CD8-positive, alpha-beta T cell (primary cell): ENCODE measurements at regions of chr12 and their contacts with region 1.

Region 1: GRCh38 chr12:108562348-108563135 is at the start of gene ISCU:
- DNase-seq: peak; percentile 97 to 100 (median 99)
- ATAC-seq: peak; percentile 70
- H3K4me3 ChIP-seq: peak within 1 kb of the TSS; percentile 90 to 96
- H3K4me3 Mint-ChIP-seq: peak within 1 kb of the TSS; percentile 100
- H3K27ac ChIP-seq: peak within 1 kb of the TSS; percentile 92 to 94
- H3K27ac Mint-ChIP-seq: peak within 1 kb of the TSS; percentile 100
- H3K4me1 ChIP-seq: peaks cover 44% of the 10 kb centered on the region
- H3K4me1 Mint-ChIP-seq: peaks cover 55% of the 10 kb centered on the region
- H3K27me3 ChIP-seq: no peaks in the 10 kb centered on the region
- H3K27me3 Mint-ChIP-seq: no peaks in the 10 kb centered on the region
- CTCF ChIP-seq: no peak
- total RNA-seq, gene ISCU: 254 to 260 TPM

Region 2: GRCh38 chr12:106962286-106962685 is 1600.3 kb before region 1 on chr12:
- CTCF ChIA-PET with region 1: no interaction called
- POLR2A ChIA-PET with region 1: no interaction called
- intact Hi-C with region 1: no loop called
- DNase-seq: no peak
- ATAC-seq: no peak
- H3K4me3 ChIP-seq: no peak overlapping the region
- H3K4me3 Mint-ChIP-seq: no peak overlapping the region
- H3K27ac ChIP-seq: no peak overlapping the region
- H3K27ac Mint-ChIP-seq: no peak overlapping the region
- H3K4me1 ChIP-seq: peaks cover 33% of the 10 kb centered on the region
- H3K4me1 Mint-ChIP-seq: peaks cover 64% of the 10 kb centered on the region
- H3K27me3 ChIP-seq: no peaks in the 10 kb centered on the region
- H3K27me3 Mint-ChIP-seq: no peaks in the 10 kb centered on the region
- CTCF ChIP-seq: no peak

Region 3: DNA sequence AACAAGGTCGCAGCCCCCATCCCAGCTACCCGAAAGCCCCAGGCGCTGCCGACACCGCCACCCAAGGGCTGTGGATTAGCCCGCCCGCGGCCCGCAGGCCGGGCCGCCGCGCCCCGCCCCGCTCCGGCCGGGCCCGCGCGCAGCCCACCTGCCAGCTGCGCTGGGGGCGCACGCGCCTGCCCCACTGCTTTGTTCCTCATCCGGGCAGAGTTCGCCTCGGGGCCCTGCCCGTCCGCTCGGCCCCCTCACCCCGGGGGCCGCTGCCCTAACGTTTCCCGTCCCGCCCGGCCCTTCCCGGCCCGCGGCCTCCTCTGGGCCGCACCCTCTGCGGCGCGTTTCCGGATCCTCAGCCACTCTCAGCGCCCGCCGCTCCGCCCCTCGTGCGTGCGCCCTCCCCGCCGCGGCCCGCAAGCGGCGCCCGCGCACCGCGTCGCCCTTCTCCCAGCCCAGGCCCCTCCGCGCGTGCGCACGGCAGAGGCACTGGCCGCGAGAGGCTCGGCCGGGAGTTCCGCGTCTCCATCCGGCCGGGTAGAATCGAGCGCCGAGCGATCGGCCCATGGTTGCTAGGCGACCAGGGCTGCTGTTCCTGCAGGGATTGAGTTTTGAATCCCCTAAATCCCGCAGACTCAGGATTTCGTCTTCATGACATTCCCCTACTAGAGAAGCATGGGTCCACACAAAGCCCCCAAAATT is 801.6 kb before region 1 on chr12 and contains the start of gene PRDM4:
- CTCF ChIA-PET with region 1: no interaction called
- POLR2A ChIA-PET with region 1: no interaction called
- intact Hi-C with region 1: loop called in 1 of 2 experiments (anchors 2 kb)
- DNase-seq: peak; percentile 76 to 97 (median 88)
- ATAC-seq: peak; percentile 95
- H3K4me3 ChIP-seq: peak within 1 kb of the TSS; percentile 76 to 82
- H3K4me3 Mint-ChIP-seq: peak within 1 kb of the TSS; percentile 89
- H3K27ac ChIP-seq: peak within 1 kb of the TSS; percentile 80 to 83
- H3K27ac Mint-ChIP-seq: peak within 1 kb of the TSS; percentile 90
- H3K4me1 ChIP-seq: peaks cover 31% of the 10 kb centered on the region
- H3K4me1 Mint-ChIP-seq: peaks cover 44% of the 10 kb centered on the region
- H3K27me3 ChIP-seq: no peaks in the 10 kb centered on the region
- H3K27me3 Mint-ChIP-seq: no peaks in the 10 kb centered on the region
- CTCF ChIP-seq: no peak
- total RNA-seq, gene PRDM4: 44.9 to 46.0 TPM

Region 4: GRCh38 chr12:108664338-108665258 is 102.1 kb after region 1 on chr12:
- CTCF ChIA-PET with region 1: interaction called, 75 read pairs
- POLR2A ChIA-PET with region 1: interaction called, 10 read pairs
- intact Hi-C with region 1: loop called in 1 of 2 experiments (anchors 1 kb)
- DNase-seq: peak; percentile 70 to 89 (median 83)
- ATAC-seq: peak; percentile 100
- H3K4me3 ChIP-seq: no peak overlapping the region
- H3K4me3 Mint-ChIP-seq: no peak overlapping the region
- H3K27ac ChIP-seq: peak overlapping the region in 1 of 2 experiments; percentile 31
- H3K27ac Mint-ChIP-seq: peak overlapping the region; percentile 79
- H3K4me1 ChIP-seq: peaks cover 5% of the 10 kb centered on the region
- H3K4me1 Mint-ChIP-seq: peaks cover 15% of the 10 kb centered on the region
- H3K27me3 ChIP-seq: no peaks in the 10 kb centered on the region
- H3K27me3 Mint-ChIP-seq: no peaks in the 10 kb centered on the region
- CTCF ChIP-seq: peak; percentile 92

Region 5: GRCh38 chr12:108856428-108857157 is 294.1 kb after region 1 on chr12:
- CTCF ChIA-PET with region 1: no interaction called
- POLR2A ChIA-PET with region 1: interaction called, 7 read pairs
- intact Hi-C with region 1: loop called in 1 of 2 experiments (anchors 1 kb)
- DNase-seq: peak; percentile 27 to 92 (median 64)
- ATAC-seq: peak; percentile 70
- H3K4me3 ChIP-seq: peak overlapping the region; percentile 58 to 71
- H3K4me3 Mint-ChIP-seq: peak overlapping the region; percentile 98
- H3K27ac ChIP-seq: peak overlapping the region; percentile 54 to 77
- H3K27ac Mint-ChIP-seq: peak overlapping the region; percentile 97
- H3K4me1 ChIP-seq: peaks cover 27% of the 10 kb centered on the region
- H3K4me1 Mint-ChIP-seq: peaks cover 46% of the 10 kb centered on the region
- H3K27me3 ChIP-seq: peaks cover 0 to 2% of the 10 kb centered on the region in 2 experiments
- H3K27me3 Mint-ChIP-seq: no peaks in the 10 kb centered on the region
- CTCF ChIP-seq: no peak

Region 6: GRCh38 chr12:109093022-109093918 is 530.7 kb after region 1 on chr12 and contains the start of gene ALKBH2:
- CTCF ChIA-PET with region 1: interaction called, 3 read pairs
- POLR2A ChIA-PET with region 1: no interaction called
- intact Hi-C with region 1: loop called (anchors 1 kb)
- DNase-seq: peak; percentile 89 to 99 (median 95)
- ATAC-seq: peak; percentile 77
- H3K4me3 ChIP-seq: peak within 1 kb of the TSS; percentile 63 to 78
- H3K4me3 Mint-ChIP-seq: peak within 1 kb of the TSS; percentile 83
- H3K27ac ChIP-seq: peak within 1 kb of the TSS; percentile 65 to 69
- H3K27ac Mint-ChIP-seq: peak within 1 kb of the TSS; percentile 91
- H3K4me1 ChIP-seq: peaks cover 27% of the 10 kb centered on the region
- H3K4me1 Mint-ChIP-seq: peaks cover 40% of the 10 kb centered on the region
- H3K27me3 ChIP-seq: no peaks in the 10 kb centered on the region
- H3K27me3 Mint-ChIP-seq: no peaks in the 10 kb centered on the region
- CTCF ChIP-seq: peak; percentile 94
- total RNA-seq, gene ALKBH2: 9.8 to 12.8 TPM

Region 7: GRCh38 chr12:109477185-109477962 is 914.8 kb after region 1 on chr12 and contains the starts of genes KCTD10 and UBE3B:
- CTCF ChIA-PET with region 1: no interaction called
- POLR2A ChIA-PET with region 1: no interaction called
- intact Hi-C with region 1: loop called in 1 of 2 experiments (anchors 5 kb)
- DNase-seq: peak; percentile 73 to 94 (median 86)
- ATAC-seq: peak; percentile 90
- H3K4me3 ChIP-seq: peak within 1 kb of the TSS; percentile 92 to 94
- H3K4me3 Mint-ChIP-seq: peak within 1 kb of the TSS; percentile 97
- H3K27ac ChIP-seq: peak within 1 kb of the TSS; percentile 76 to 94
- H3K27ac Mint-ChIP-seq: peak within 1 kb of the TSS; percentile 98
- H3K4me1 ChIP-seq: peaks cover 35% of the 10 kb centered on the region
- H3K4me1 Mint-ChIP-seq: peaks cover 51% of the 10 kb centered on the region
- H3K27me3 ChIP-seq: no peaks in the 10 kb centered on the region
- H3K27me3 Mint-ChIP-seq: no peaks in the 10 kb centered on the region
- CTCF ChIP-seq: no peak
- total RNA-seq, gene KCTD10: 26.2 to 31.3 TPM
- total RNA-seq, gene UBE3B: 16.5 to 17.8 TPM